ENCODE measurements at regions of chr14 and their contacts with region 1.

Region 1: GRCh38 chr14:78092040-78092439 is 78.1 kb upstream of the NRXN3 start:
- DNase-seq: no peak
- H3K4me3 ChIP-seq: no peak overlapping the region
- CTCF ChIP-seq: no peak

Region 2: GRCh38 chr14:78037146-78037545 is 54.9 kb before region 1 on chr14:
- in situ Hi-C with region 1: no loop called
- DNase-seq: no peak
- H3K4me3 ChIP-seq: no peak overlapping the region
- CTCF ChIP-seq: no peak

Region 3: GRCh38 chr14:78048120-78048519 is 43.9 kb before region 1 on chr14:
- in situ Hi-C with region 1: no loop called
- DNase-seq: no peak
- H3K4me3 ChIP-seq: no peak overlapping the region
- CTCF ChIP-seq: no peak

Region 4: GRCh38 chr14:78182722-78183121 is 90.7 kb after region 1 on chr14:
- in situ Hi-C with region 1: loop called (anchors 5 kb)
- DNase-seq: no peak
- H3K4me3 ChIP-seq: no peak overlapping the region
- CTCF ChIP-seq: no peak

Region 5: GRCh38 chr14:78746086-78746595 is 654.1 kb after region 1 on chr14:
- in situ Hi-C with region 1: no loop called
- DNase-seq: no peak
- H3K4me3 ChIP-seq: no peak overlapping the region
- CTCF ChIP-seq: no peak